Left ventricle myocardium inferior (tissue), 1 donor: ENCODE measurements at regions of chr6 and their contacts with region 1.

Region 1: DNA sequence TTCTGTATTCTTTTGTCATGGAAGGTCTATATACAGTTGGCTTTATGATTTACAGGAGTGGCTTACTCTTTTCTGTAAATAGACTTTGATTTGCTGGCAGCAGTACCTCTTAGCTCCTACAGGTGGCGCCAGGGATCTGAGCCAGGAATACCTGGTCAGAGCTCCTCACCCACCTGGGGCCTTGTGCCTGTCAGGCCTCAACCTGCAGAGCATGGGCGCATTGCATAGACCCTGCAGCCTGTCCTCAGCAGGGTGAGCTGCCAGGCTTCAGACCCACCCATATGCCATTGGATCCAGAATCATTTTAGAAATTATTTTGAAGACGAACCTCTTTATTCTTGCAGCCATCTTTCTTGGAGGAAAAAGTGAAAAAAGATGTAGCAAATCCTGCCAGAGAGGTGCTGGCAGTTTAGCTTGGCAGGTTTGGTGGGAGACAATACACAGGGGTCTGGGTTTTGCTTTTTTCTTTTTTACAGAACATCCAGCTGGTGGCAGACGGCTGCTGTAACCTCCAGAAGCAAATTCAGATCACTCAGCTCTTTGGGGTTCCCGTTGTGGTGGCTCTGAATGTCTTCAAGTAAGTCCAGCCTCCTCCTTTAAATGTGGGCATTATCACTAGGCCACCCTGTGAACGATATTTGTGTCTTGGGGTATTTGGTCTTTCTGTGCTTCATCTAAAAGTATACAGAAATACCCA is 149.1 kb downstream of the MTHFD1L start:
- DNase-seq: peak; percentile 62
- H3K4me3 ChIP-seq: peak overlapping the region; percentile 24
- H3K27ac ChIP-seq: peak overlapping the region; percentile 2
- H3K4me1 ChIP-seq: peaks cover 7% of the 10 kb centered on the region
- H3K27me3 ChIP-seq: no peaks in the 10 kb centered on the region
- CTCF ChIP-seq: peak; percentile 100

Region 2: GRCh38 chr6:151323791-151324487 is 309.4 kb after region 1 on chr6:
- intact Hi-C with region 1: loop called (anchors 5 kb)
- DNase-seq: peak; percentile 77
- H3K4me3 ChIP-seq: no peak overlapping the region
- H3K27ac ChIP-seq: peak overlapping the region; percentile 53
- H3K4me1 ChIP-seq: peaks cover 33% of the 10 kb centered on the region
- H3K27me3 ChIP-seq: peaks cover 12% of the 10 kb centered on the region
- CTCF ChIP-seq: peak; percentile 99